ENCODE measurements at regions of chr5 and their contacts with region 1.

Region 1: DNA sequence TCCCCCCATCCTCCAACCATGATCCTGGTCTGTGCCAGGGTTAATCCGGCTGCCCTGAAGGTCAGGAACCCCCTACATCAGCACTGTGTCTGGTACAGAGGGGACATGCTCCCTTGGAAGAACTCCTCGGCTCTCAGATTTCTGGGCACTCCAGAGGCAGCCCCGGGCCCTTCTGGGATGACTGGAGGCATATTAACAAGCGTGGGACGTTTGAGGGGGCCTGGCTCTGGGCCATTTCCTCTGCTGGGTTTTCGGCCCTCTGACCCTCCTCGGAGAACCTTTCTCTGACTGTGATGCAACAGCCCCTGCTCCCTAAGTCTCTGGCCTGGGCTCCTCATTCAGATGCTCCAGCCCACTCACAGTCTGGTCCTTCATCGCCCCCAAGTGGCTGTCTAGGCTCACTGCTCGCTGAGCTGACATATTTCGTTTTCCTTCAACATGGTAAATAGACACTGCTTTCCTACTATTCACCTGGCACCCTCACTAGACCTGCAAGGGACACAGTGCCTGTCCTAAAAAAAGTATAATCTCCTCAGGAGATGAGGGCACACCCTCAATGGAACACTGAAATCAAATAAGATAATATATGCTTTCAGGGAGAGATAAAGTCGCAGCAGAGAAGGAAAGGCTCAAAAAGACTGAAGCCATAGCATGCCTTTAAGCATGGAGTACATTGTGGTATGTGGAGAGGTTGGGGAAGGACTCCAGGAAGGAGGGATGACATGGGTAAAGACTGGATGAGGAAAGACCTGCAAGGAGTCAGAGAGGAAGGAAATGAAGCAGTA is 404.7 kb upstream of the TRPC7 start:
- DNase-seq: no peak
- H3K4me3 ChIP-seq: no peak overlapping the region
- CTCF ChIP-seq: peak; percentile 89

Region 2: GRCh38 chr5:136249678-136250266 is 520.3 kb before region 1 on chr5:
- CTCF ChIA-PET with region 1: interaction called, 67 read pairs
- POLR2A ChIA-PET with region 1: no interaction called
- DNase-seq: peak; percentile 41
- H3K4me3 ChIP-seq: no peak overlapping the region
- CTCF ChIP-seq: peak; percentile 92

Region 3: GRCh38 chr5:136364307-136364706 is 405.8 kb before region 1 on chr5:
- CTCF ChIA-PET with region 1: interaction called, 50 read pairs
- POLR2A ChIA-PET with region 1: no interaction called
- DNase-seq: no peak
- H3K4me3 ChIP-seq: no peak overlapping the region
- CTCF ChIP-seq: peak; percentile 7

Region 4: DNA sequence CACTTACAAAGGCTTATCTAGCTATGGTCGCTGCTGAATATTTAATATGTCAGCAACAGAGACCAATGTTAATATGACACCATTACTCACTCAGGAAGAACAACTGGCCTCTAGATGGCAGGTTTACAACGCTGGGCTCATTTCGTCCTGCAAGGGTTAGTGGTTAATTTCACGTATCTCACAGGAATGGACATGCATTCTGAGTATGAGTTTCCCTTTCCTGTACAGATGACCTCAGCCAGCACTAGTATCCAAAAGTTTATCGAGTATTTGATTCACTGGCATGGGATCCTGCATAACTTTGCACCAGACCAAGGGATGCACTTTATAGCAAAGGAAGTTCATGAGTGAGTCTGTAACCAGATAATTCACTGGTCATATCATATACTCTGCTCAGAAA is 396.1 kb before region 1 on chr5:
- CTCF ChIA-PET with region 1: interaction called, 17 read pairs
- POLR2A ChIA-PET with region 1: no interaction called
- DNase-seq: no peak
- H3K4me3 ChIP-seq: no peak overlapping the region
- CTCF ChIP-seq: peak; percentile 42

Region 5: GRCh38 chr5:136638077-136638476 is 132.0 kb before region 1 on chr5:
- CTCF ChIA-PET with region 1: interaction called, 230 read pairs
- POLR2A ChIA-PET with region 1: no interaction called
- DNase-seq: no peak
- H3K4me3 ChIP-seq: no peak overlapping the region
- CTCF ChIP-seq: peak; percentile 48

Region 6: GRCh38 chr5:136780522-136780921 is 10.4 kb after region 1 on chr5:
- CTCF ChIA-PET with region 1: interaction called, 13 read pairs
- POLR2A ChIA-PET with region 1: no interaction called
- DNase-seq: no peak
- H3K4me3 ChIP-seq: no peak overlapping the region
- CTCF ChIP-seq: no peak

Measured in AG04449 (cell line).